ENCODE measurements at regions of chr16 and their contacts with region 1.

Region 1: GRCh38 chr16:27179500-27180072 is 23.7 kb upstream of the KDM8 start:
- DNase-seq: peak; percentile 47
- ATAC-seq: peak; percentile 70
- H3K4me3 ChIP-seq: no peak overlapping the region
- H3K27ac ChIP-seq: no peak overlapping the region
- H3K4me1 ChIP-seq: peaks cover 11% of the 10 kb centered on the region
- H3K27me3 ChIP-seq: no peaks in the 10 kb centered on the region
- CTCF ChIP-seq: peak; percentile 78
- POLR2A ChIP-seq: no peak
- RAD21 ChIP-seq: peak; percentile 65

Region 2: GRCh38 chr16:27222249-27223225 is 43.0 kb after region 1 on chr16:
- CTCF ChIA-PET with region 1: no interaction called
- POLR2A ChIA-PET with region 1: no interaction called
- dilution Hi-C with region 1: no loop called
- in situ Hi-C with region 1: no loop called
- intact Hi-C with region 1: loop called (anchors 1 kb)
- DNase-seq: peak; percentile 76
- ATAC-seq: peak; percentile 61
- H3K4me3 ChIP-seq: no peak overlapping the region
- H3K27ac ChIP-seq: peak overlapping the region; percentile 75
- H3K4me1 ChIP-seq: peaks cover 23% of the 10 kb centered on the region
- H3K27me3 ChIP-seq: no peaks in the 10 kb centered on the region
- CTCF ChIP-seq: no peak
- POLR2A ChIP-seq: no peak
- RAD21 ChIP-seq: no peak

Region 3: GRCh38 chr16:27455700-27456099 is 276.1 kb after region 1 on chr16:
- CTCF ChIA-PET with region 1: no interaction called
- POLR2A ChIA-PET with region 1: no interaction called
- dilution Hi-C with region 1: no loop called
- in situ Hi-C with region 1: no loop called
- intact Hi-C with region 1: loop called (anchors 2 kb)
- DNase-seq: no peak
- ATAC-seq: no peak
- H3K4me3 ChIP-seq: no peak overlapping the region
- H3K27ac ChIP-seq: no peak overlapping the region
- H3K4me1 ChIP-seq: peaks cover 1% of the 10 kb centered on the region
- H3K27me3 ChIP-seq: no peaks in the 10 kb centered on the region
- CTCF ChIP-seq: no peak
- POLR2A ChIP-seq: no peak
- RAD21 ChIP-seq: no peak